Right ventricle myocardium inferior (tissue), 1 donor: ENCODE measurements at regions of chr10 and their contacts with region 1.

Region 1: DNA sequence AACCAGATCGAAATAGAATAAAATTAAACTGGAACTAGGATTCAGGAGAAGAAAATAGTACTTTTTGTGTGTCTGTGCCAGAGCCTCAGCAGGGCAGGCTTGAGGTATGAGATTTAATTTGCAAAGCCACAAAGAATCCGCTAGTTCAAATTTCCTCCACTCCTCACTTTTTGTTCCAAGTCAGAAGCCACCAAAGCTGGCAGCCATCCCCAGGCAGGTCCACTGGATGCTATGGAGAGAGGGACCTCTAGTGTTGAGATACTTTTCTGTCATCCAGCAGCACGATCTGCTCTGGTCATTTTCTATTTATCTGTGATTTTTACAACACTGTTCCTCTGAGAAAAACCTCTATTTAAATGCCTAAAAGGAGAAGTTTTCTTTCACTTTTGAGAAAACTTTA is 147.9 kb upstream of the FRMD4A start:
- DNase-seq: peak; percentile 82
- ATAC-seq: peak; percentile 73

Region 2: GRCh38 chr10:14200698-14201544 is 277.7 kb before region 1 on chr10:
- intact Hi-C with region 1: loop called (anchors 1 kb)
- DNase-seq: no peak
- ATAC-seq: no peak

Region 3: DNA sequence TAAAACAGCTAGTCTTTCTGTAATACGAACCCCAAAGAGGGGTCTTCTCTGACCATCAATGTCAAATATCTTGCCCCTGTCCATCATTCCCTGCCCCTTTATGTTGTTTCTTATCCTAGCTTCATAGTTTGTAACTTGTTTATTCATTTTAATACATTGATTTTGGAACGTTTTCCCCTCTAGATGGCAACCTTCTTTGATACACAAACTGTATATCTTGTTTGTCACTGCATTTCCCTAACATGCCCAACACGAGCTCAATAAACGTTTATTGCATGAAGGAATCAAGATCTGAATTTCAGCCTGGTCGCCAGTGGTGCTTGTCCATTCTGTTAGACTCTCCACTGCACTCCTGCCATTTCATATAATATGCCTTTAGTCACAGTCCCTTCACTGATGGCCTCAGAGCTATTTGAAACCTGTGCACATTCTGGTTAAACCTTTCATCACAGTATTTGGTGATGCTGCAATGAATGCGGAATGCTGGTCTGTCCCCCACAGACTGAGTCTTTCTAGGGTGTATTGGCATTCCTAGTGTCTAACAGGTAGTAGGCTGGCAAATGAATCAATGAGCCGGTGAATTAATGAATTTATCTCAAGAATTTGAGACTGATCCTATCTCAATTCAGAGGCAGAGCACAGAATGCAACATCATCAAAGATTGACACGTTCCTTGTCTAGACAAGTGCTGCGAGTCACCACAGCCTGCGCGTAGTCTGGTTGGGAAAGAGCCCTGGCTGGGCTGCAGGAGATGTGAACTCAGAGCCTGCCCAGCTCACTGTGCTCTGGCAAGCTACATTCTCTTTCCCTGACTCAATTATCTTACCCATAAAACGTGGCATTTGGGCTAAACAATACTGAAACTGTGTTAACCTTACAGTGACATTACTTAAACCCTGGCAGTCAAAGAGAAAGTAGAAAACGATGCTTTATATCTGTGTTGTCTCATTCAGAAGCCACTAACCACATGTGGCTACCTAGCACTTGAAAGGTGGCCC is 92.7 kb before region 1 on chr10:
- intact Hi-C with region 1: loop called (anchors 2 kb)
- DNase-seq: no peak
- ATAC-seq: no peak

Region 4: DNA sequence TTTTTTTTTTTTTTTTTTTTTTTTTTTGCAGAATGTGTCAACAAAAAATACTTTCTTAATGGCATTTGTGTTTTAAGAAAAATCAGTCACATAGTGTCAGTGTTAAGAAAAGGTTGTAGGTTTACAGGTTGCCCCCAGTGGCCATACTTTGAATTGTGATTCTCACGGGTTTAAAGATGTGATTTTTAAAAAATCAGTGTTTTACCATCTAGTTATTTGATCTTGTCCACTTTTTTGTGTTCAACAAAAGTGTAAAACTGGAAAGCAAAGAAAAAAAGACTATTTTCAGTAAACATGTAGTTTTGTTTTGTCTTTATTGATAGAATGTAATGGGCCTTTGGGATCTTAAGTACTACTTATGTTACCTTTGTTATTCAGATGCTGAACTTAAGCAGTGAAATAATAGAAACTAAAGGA is 425.7 kb after region 1 on chr10:
- intact Hi-C with region 1: no loop called
- DNase-seq: no peak
- ATAC-seq: no peak